ENCODE measurements at regions of chr20 and their contacts with region 1.

Region 1: DNA sequence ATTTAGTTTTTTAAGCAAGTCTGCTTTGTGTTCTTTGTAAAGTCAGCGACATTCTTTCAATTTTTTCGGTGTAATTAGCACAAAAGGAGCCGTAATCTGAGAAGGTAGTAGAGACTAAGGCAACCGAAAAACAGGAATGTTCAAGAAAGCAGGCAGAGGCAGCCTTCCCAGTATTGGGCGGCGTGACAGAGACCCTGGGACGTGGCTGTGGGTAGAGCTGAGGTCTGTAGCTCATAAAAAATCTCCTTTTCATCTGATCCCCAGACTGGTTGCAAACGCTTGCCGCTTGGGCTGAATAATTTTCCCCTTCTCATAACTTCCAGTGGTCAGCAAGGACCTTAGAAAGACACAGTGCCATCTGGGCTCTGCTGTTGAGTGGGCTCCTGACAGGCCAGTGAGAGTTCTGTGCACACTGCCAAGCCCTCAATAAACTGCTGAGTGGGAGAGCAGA is 30.8 kb downstream of the GNAS start:
- DNase-seq: no peak
- ATAC-seq: no peak
- H3K4me3 Mint-ChIP-seq: no peak overlapping the region
- H3K27ac Mint-ChIP-seq: no peak overlapping the region
- H3K4me1 Mint-ChIP-seq: peaks cover 48% of the 10 kb centered on the region
- H3K27me3 Mint-ChIP-seq: no peaks in the 10 kb centered on the region

Region 2: GRCh38 chr20:58675146-58675584 is 208.1 kb before region 1 on chr20:
- CTCF ChIA-PET with region 1: no interaction called
- POLR2A ChIA-PET with region 1: no interaction called
- DNase-seq: no peak
- ATAC-seq: no peak
- H3K4me3 Mint-ChIP-seq: no peak overlapping the region
- H3K27ac Mint-ChIP-seq: no peak overlapping the region
- H3K4me1 Mint-ChIP-seq: no peaks in the 10 kb centered on the region
- H3K27me3 Mint-ChIP-seq: no peaks in the 10 kb centered on the region

Region 3: DNA sequence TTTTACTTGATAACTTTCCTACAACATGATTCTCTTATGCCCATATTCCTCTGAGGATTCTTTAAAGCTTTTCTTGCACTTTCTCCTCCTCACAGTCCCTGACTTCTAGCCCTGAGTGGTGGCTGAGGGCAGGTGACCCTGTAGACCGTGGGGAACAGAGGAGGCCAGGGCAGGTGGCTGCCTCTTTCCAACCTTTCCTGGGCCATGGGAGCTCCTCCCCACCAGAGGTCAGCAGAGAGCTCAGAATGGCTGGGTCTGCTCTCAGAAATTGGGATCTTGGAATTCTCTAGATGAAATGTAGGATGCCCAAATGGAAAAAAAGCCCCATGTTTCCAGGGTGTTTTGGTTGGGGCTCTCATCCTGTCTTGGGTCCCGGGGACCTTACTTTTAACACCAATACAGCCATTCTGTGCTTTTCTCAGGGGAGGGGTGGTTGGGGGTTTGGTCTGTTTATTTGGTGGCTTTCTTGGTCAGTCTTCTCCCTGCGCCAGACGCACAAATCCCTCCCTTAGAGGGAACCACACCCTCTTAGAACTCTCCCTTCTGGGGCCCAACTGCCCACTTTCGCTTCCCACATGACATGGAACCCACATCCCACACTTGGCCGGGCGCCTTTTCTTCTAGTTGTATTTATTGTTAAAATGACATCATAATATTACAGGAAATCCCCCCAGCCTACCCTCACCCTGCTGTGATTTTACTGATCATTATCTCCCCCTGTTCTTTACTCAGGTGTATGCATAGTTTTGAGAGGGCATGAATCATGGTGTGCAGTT is 12.8 kb before region 1 on chr20:
- CTCF ChIA-PET with region 1: interaction called, 11 read pairs
- POLR2A ChIA-PET with region 1: interaction called, 4 read pairs
- DNase-seq: peak; percentile 63
- ATAC-seq: peak; percentile 86
- H3K4me3 Mint-ChIP-seq: no peak overlapping the region
- H3K27ac Mint-ChIP-seq: no peak overlapping the region
- H3K4me1 Mint-ChIP-seq: peaks cover 20% of the 10 kb centered on the region
- H3K27me3 Mint-ChIP-seq: peaks cover 13% of the 10 kb centered on the region

Measured in activated CD8-positive, alpha-beta T cell treated with anti-CD3 and anti-CD28 coated beads, Interleukin-2, amount 10 ng/mL, durations not matched to agents 7 days and 5 days (primary cell).